ENCODE measurements at regions of chr14 and their contacts with region 1.

Region 1: DNA sequence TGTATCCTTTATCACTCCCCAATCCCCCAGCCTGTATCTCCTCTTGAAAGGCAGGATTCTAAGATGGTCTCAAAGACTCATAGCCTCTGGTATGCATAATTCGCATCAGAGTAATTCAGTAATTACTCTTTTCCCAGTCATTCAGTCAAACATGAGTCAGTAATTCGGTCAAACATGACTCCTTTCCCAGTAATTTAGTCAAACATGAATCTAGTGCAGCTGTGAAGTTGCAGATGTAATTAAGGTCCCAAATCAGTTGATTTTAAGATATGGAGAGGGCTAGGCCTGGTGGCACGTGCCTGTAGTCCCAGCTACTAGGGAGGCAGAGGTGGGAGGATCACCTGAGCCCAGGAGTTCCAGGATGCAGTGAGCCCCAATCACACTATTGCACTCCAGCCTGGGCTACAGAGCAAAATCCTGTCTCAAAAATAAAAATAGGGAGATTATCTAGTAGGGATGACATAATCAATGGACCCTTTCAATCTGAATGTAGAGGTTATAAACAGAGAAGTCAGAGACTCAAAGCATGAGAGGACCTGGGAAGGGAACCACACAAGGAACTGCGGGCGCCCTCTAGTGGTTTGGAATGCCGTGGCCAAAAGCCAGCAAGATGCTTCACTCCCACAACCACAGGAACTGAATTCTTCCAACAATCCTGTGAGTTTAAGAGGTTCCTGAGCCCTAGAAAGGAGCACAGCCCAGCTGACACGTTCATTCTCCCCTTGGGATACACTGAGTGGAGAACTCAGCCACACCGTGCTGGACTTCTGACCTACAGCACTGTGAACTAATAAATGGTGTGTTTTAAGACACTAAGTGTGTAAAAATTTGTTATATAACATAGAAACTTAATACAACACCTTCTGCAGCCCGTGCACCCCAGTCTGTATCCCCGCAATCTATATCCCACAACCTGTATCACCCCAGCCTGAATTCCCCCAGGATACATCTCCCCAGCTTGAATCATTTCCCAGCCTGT is 14.3 kb upstream of the ARMH4 start:
- DNase-seq: peak; percentile 22
- H3K4me3 ChIP-seq: no peak overlapping the region
- H3K27me3 ChIP-seq: no peaks in the 10 kb centered on the region
- CTCF ChIP-seq: peak; percentile 86

Region 2: GRCh38 chr14:57725399-57726077 is 440.8 kb before region 1 on chr14:
- CTCF ChIA-PET with region 1: no interaction called
- POLR2A ChIA-PET with region 1: no interaction called
- DNase-seq: peak; percentile 4
- H3K4me3 ChIP-seq: no peak overlapping the region
- H3K27me3 ChIP-seq: no peaks in the 10 kb centered on the region
- CTCF ChIP-seq: no peak

Region 3: GRCh38 chr14:58107947-58108552 is 58.2 kb before region 1 on chr14:
- CTCF ChIA-PET with region 1: interaction called, 38 read pairs
- POLR2A ChIA-PET with region 1: no interaction called
- DNase-seq: peak; percentile 7
- H3K4me3 ChIP-seq: no peak overlapping the region
- H3K27me3 ChIP-seq: peaks cover 9% of the 10 kb centered on the region
- CTCF ChIP-seq: peak; percentile 78

Region 4: DNA sequence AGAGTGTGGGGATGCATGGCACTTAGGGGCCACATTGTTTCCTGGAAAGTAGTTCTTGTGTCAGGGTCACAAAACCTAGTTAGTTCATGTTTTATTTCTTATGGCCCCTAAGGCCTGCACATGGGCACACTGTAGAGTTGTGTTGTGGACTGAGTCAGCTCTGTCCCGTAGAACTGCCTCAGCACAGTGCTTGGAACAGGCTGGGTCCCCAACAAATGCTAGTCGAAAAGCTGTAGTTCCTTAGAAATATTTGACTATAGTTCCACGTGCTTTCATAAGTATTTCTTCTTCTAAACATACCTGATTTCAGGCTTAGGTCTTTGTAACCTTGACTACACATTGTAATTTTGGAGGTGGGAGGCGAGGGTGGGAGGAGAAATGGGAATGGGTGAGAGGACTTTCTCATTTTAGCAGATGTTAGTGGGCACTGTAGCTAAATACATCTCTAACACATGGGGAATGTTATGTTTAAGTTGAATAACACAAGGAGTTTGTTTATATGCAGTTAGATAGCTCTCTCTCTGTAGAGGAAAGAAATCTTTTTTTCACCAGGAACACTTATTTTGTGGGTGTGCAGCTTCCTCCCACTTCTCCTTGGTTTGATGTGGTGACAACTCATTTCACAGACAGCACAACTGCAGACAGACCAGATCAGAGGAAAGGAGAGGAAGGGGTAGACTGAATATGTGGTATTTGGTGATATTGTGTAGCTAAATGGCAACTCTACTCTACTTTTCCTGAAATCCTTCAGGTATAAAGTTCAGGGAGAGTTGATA is 431.9 kb after region 1 on chr14:
- CTCF ChIA-PET with region 1: no interaction called
- POLR2A ChIA-PET with region 1: no interaction called
- DNase-seq: no peak
- H3K4me3 ChIP-seq: no peak overlapping the region
- H3K27me3 ChIP-seq: peaks cover 5% of the 10 kb centered on the region
- CTCF ChIP-seq: no peak

Measured in BJ (cell line).